GM10248 (cell line): ENCODE measurements at regions of chr2 and their contacts with region 1.

Region 1: GRCh38 chr2:68441179-68441993 is 25.7 kb downstream of the FBXO48 start:
- DNase-seq: peak; percentile 78
- CTCF ChIP-seq: peak; percentile 82

Region 2: GRCh38 chr2:67954093-67954748 is 487.2 kb before region 1 on chr2:
- CTCF ChIA-PET with region 1: no interaction called
- POLR2A ChIA-PET with region 1: no interaction called
- DNase-seq: no peak
- CTCF ChIP-seq: no peak

Region 3: DNA sequence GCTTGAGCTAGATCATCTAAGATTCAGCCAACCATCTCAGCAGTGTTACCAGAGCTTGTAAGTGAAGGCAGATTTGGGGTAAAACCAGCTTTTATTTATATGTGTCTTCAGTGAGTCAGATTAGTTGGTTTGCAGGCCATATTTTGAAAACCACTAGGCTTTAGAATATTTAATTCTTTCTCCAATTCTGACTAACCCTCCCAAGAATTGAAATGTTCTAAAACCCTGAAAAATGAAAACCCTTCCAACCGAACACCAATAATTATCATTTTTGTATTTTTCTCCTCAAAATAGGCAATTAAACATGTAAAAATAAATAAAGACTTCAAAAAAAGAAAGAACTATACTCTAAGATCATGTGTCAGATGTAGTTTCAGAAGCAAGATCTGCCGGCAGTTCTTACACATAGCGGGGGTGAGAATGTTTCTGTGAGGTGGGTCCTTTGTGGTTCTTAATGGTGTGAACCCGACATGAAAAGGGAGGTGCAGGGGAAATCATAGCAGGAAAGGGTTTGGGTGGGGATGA is 62.1 kb before region 1 on chr2:
- CTCF ChIA-PET with region 1: interaction called, 11 read pairs
- POLR2A ChIA-PET with region 1: no interaction called
- DNase-seq: peak; percentile 34
- CTCF ChIP-seq: no peak

Region 4: GRCh38 chr2:68411397-68412126 is 29.8 kb before region 1 on chr2:
- CTCF ChIA-PET with region 1: interaction called, 26 read pairs
- POLR2A ChIA-PET with region 1: interaction called, 6 read pairs
- DNase-seq: no peak
- CTCF ChIP-seq: no peak

Region 5: GRCh38 chr2:68423966-68424650 is 17.3 kb before region 1 on chr2:
- CTCF ChIA-PET with region 1: interaction called, 137 read pairs
- POLR2A ChIA-PET with region 1: interaction called, 4 read pairs
- DNase-seq: peak; percentile 66
- CTCF ChIP-seq: no peak